ENCODE measurements at regions of chr12 and their contacts with region 1.

Region 1: DNA sequence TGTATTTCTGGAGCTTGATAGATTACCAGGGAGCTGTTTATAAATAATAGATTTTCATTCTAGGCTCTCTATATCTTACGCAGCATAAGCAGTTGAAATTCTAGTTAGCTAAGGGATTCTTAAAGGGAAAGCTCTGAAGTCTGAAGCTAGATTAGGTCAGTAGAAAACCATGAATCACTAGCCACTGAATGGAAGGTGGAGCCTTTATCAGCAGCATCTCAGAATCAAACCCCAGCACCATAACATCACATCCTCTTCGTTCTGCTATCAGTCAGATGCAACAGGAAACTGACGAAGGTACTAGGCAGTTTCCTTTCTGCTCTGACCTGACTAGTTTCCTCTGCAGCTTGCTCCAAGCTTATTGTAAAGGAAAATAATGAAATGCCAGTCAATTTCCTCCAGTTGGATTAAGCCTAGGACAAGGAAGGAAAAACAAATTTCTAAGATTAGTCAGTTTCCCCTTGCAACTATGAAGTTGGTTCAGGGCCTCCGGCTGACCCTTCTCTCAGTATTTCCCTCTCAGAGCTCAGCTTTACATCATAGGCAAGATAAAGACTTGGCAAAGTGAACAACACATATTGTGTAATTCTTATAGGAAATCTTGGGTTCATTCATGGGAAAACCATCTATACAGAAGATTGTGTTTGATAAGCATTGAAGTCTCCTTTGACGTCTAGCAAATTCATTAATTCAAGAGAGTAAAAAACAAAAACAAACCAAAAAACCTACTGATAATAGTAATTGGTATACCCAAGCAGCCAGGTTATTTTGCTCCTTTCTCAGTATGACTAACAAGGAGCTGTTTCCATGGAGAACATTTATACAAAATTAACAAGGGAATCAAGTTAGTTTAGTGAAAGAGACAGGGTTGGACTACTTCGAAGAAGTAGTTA is 43.4 kb upstream of the CFAP54 start:
- DNase-seq: peak in 34 of 35 experiments; percentile 12 to 91 (median 57)
- ATAC-seq: peak; percentile 96 to 100 (median 99)
- H3K4me3 ChIP-seq: no peak overlapping the region
- H3K4me3 Mint-ChIP-seq: peak overlapping the region; percentile 32 to 63 (median 42)
- H3K27ac ChIP-seq: peak overlapping the region; percentile 97
- H3K27ac Mint-ChIP-seq: peak overlapping the region; percentile 94
- H3K4me1 ChIP-seq: peaks cover 19 to 25% of the 10 kb centered on the region in 2 experiments
- H3K4me1 Mint-ChIP-seq: peaks cover 40 to 45% (median 42%) of the 10 kb centered on the region in 3 donors
- H3K27me3 ChIP-seq: no peaks in the 10 kb centered on the region
- H3K27me3 Mint-ChIP-seq: no peaks in the 10 kb centered on the region

Region 2: DNA sequence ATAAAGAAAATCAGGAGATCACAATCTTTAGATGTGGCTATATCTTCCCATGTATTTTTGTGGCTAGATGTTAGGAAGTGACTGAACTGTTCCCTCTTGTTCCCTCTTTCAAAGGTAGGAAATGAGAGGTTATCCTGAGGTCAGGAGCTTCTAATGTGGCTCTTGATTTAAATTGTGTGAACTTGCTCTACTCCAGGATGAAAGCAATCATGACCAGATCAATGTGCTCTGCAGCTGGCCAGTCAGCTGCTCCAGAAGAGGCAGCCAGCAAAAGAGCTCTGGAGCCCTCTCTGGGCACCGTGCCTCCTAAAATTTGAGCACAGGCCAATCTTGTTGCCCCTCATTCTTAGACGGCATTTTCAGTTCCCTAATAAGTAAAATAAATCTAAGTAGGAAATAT is 77.7 kb before region 1 on chr12:
- CTCF ChIA-PET with region 1: interaction called in 1 of 2 experiments, 11 read pairs
- POLR2A ChIA-PET with region 1: no interaction called
- DNase-seq: no peak
- ATAC-seq: no peak
- H3K4me3 ChIP-seq: no peak overlapping the region
- H3K4me3 Mint-ChIP-seq: peak overlapping the region in 1 of 3 donors; percentile 22
- H3K27ac ChIP-seq: no peak overlapping the region
- H3K27ac Mint-ChIP-seq: no peak overlapping the region
- H3K4me1 ChIP-seq: peaks cover 21 to 30% of the 10 kb centered on the region in 2 experiments
- H3K4me1 Mint-ChIP-seq: peaks cover 77 to 88% (median 78%) of the 10 kb centered on the region in 3 donors
- H3K27me3 ChIP-seq: no peaks in the 10 kb centered on the region
- H3K27me3 Mint-ChIP-seq: no peaks in the 10 kb centered on the region

Region 3: GRCh38 chr12:96434107-96434506 is 11.8 kb before region 1 on chr12:
- CTCF ChIA-PET with region 1: interaction called, 4 to 5 read pairs
- POLR2A ChIA-PET with region 1: interaction called, 6 to 22 read pairs
- DNase-seq: peak; percentile 29 to 94 (median 70)
- ATAC-seq: peak; percentile 98 to 100 (median 100)
- H3K4me3 ChIP-seq: peak overlapping the region in 1 of 2 donors; percentile 2
- H3K4me3 Mint-ChIP-seq: peak overlapping the region; percentile 5 to 49 (median 7)
- H3K27ac ChIP-seq: peak overlapping the region; percentile 87
- H3K27ac Mint-ChIP-seq: peak overlapping the region; percentile 30 to 62
- H3K4me1 ChIP-seq: peaks cover 10 to 23% of the 10 kb centered on the region in 2 experiments
- H3K4me1 Mint-ChIP-seq: peaks cover 33 to 42% (median 41%) of the 10 kb centered on the region in 3 donors
- H3K27me3 ChIP-seq: no peaks in the 10 kb centered on the region
- H3K27me3 Mint-ChIP-seq: no peaks in the 10 kb centered on the region

Region 4: GRCh38 chr12:96473394-96474093 is 27.6 kb after region 1 on chr12:
- CTCF ChIA-PET with region 1: no interaction called
- POLR2A ChIA-PET with region 1: interaction called in 1 of 2 experiments, 14 read pairs
- DNase-seq: peak in 24 of 35 experiments; percentile 12 to 66 (median 34)
- ATAC-seq: peak in 2 of 4 experiments; percentile 44 to 56
- H3K4me3 ChIP-seq: no peak overlapping the region
- H3K4me3 Mint-ChIP-seq: no peak overlapping the region
- H3K27ac ChIP-seq: no peak overlapping the region
- H3K27ac Mint-ChIP-seq: no peak overlapping the region
- H3K4me1 ChIP-seq: peaks cover 0 to 15% of the 10 kb centered on the region in 2 experiments
- H3K4me1 Mint-ChIP-seq: peaks cover 0 to 10% (median 10%) of the 10 kb centered on the region in 3 donors
- H3K27me3 ChIP-seq: no peaks in the 10 kb centered on the region
- H3K27me3 Mint-ChIP-seq: no peaks in the 10 kb centered on the region

Region 5: DNA sequence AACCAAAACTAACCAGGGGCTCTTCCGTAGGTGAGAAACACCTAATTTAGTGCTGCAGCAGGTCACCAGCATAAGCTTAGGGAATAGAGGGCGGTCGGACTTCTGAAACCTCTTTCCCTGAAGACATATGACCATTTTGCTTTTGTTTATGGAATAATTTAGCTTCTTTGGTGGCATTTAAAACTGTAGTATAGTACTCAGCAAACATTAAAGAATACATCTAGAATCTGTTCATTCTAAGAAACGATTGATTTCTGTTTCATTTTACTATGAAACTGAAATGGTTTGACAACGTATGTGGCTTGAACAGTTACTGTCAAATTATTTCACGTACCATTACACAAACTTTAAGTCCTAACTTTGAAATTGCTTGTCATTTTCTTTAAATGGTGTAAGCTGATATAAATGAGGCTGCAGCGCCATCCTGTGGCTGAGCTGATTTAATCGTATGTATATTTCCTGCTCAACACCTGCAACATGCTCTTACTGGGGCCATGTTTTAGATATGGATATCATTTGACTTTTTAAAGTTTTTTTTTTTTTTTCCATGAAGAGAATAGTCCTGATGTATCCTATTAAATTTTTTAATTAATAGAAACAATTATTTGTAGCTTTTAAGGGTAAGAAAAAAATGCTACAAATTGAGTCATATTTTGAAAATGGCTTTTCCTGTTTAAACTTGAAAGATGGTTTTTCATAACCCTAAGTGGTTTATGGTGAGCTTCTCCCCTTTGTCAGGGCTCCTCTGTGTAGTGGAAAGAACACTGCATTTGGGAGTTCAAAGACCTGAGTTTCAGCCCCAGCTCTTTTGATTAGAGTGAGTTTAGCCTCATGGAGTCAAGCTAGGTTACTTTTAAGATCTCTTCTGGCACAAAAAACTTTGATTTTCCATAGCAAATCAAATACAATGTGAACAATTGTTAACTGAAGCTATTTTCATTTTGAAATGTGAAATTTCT is 70.8 kb after region 1 on chr12:
- CTCF ChIA-PET with region 1: interaction called, 4 to 15 read pairs
- POLR2A ChIA-PET with region 1: interaction called in 1 of 2 experiments, 3 read pairs
- DNase-seq: peak; percentile 65 to 93 (median 83)
- ATAC-seq: peak; percentile 77 to 92 (median 83)
- H3K4me3 ChIP-seq: no peak overlapping the region
- H3K4me3 Mint-ChIP-seq: peak overlapping the region in 2 of 3 donors; percentile 35 to 37
- H3K27ac ChIP-seq: peak overlapping the region; percentile 28
- H3K27ac Mint-ChIP-seq: peak overlapping the region; percentile 68 to 81
- H3K4me1 ChIP-seq: peaks cover 0 to 7% of the 10 kb centered on the region in 2 experiments
- H3K4me1 Mint-ChIP-seq: peaks cover 6 to 12% (median 10%) of the 10 kb centered on the region in 3 donors
- H3K27me3 ChIP-seq: no peaks in the 10 kb centered on the region
- H3K27me3 Mint-ChIP-seq: no peaks in the 10 kb centered on the region

Region 6: DNA sequence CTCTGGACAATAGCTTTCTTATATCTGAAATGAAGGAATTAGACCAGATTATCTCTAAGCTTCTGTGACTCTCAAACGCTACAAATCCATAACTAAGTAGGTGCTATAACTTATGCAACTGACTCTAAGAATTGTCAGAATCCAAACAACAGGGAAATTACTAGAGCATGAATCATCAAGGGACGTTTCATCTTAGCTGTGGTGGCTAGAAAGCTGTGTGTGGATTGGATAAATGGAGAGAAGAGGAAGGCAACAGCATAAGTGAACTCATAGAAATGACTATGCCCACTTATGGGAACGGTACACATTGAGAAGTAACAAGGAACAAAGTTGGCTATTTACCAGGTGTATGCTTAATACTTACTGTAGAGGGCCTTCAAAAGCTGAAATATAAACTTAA is 365.1 kb after region 1 on chr12:
- CTCF ChIA-PET with region 1: no interaction called
- POLR2A ChIA-PET with region 1: no interaction called
- DNase-seq: no peak
- ATAC-seq: no peak
- H3K4me3 ChIP-seq: no peak overlapping the region
- H3K4me3 Mint-ChIP-seq: no peak overlapping the region
- H3K27ac ChIP-seq: no peak overlapping the region
- H3K27ac Mint-ChIP-seq: no peak overlapping the region
- H3K4me1 ChIP-seq: no peaks in the 10 kb centered on the region
- H3K4me1 Mint-ChIP-seq: no peaks in the 10 kb centered on the region
- H3K27me3 ChIP-seq: peaks cover 0 to 4% of the 10 kb centered on the region in 2 experiments
- H3K27me3 Mint-ChIP-seq: no peaks in the 10 kb centered on the region

Measured in T-cell (primary cell).